ENCODE measurements at regions of chr11 and their contacts with region 1.

Region 1: DNA sequence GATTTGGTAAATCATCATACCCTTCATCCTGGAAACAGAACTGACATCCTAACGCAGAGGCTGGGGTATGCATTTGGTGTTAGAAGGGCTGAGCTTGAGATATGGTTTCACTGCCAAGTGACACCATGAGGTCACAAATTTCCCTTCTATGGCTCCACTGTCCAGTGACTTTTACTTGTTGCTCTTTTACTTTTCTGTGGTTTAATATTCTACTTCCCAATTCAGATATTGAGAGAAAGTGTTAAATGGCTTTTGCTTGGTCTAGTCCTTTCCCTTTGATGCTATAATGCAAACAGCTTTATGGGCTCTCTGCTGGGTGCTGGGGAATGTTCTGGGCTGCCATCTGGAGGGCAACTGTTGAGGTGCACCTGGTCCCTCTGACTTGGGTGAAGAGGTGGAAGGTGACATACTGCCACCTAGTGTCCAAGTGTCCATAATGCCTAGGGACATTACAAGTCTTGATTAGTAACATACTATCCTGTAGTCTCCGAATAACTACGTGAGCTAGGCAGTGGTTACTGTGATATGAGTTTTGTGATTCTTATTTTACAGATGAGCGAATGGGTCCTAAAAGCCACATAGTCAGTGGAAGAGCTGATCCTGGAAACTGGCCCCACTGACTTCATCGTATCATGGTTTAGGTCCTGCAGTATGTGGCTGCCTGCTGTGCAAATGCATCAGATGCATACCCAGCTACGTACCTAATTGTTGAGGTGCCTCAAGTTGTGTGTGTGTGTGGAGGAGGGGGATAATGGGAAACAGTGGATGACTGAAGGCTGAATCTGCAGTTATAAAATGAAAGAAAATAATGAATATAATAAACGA is 149.1 kb upstream of the RAG2 start:
- DNase-seq: peak; percentile 91
- H3K4me3 Mint-ChIP-seq: no peak overlapping the region
- H3K27ac Mint-ChIP-seq: no peak overlapping the region
- H3K4me1 Mint-ChIP-seq: peaks cover 3% of the 10 kb centered on the region
- H3K27me3 Mint-ChIP-seq: peaks cover 11% of the 10 kb centered on the region

Region 2: DNA sequence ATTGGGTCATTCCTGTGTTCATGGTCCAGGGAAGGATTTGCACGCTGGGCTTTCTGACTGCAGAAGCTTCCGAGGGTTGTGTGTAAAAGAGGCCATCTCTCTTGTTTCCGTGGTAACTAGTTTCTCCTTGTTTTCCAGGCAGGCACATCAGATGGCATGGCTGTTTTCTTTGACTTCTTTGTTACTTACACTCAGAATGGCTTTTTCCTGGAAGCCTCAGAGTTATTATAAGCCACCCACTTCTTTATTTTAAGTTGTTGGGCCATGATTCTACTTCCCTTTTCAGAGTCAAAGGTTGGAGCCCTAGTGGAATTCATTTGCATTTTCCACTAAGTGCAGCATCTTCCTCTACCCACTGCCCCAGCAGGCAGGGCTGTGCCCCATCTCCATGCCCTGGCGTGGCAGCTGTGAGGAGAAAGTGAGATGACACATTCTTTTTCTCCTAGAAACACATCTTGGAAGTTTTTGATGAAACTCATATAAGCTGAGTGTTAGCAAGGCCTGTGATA is 356.1 kb before region 1 on chr11:
- CTCF ChIA-PET with region 1: no interaction called
- POLR2A ChIA-PET with region 1: no interaction called
- intact Hi-C with region 1: loop called (anchors 10 kb)
- DNase-seq: peak; percentile 68
- H3K4me3 Mint-ChIP-seq: peak overlapping the region; percentile 36
- H3K27ac Mint-ChIP-seq: peak overlapping the region; percentile 96
- H3K4me1 Mint-ChIP-seq: peaks cover 82% of the 10 kb centered on the region
- H3K27me3 Mint-ChIP-seq: no peaks in the 10 kb centered on the region

Region 3: DNA sequence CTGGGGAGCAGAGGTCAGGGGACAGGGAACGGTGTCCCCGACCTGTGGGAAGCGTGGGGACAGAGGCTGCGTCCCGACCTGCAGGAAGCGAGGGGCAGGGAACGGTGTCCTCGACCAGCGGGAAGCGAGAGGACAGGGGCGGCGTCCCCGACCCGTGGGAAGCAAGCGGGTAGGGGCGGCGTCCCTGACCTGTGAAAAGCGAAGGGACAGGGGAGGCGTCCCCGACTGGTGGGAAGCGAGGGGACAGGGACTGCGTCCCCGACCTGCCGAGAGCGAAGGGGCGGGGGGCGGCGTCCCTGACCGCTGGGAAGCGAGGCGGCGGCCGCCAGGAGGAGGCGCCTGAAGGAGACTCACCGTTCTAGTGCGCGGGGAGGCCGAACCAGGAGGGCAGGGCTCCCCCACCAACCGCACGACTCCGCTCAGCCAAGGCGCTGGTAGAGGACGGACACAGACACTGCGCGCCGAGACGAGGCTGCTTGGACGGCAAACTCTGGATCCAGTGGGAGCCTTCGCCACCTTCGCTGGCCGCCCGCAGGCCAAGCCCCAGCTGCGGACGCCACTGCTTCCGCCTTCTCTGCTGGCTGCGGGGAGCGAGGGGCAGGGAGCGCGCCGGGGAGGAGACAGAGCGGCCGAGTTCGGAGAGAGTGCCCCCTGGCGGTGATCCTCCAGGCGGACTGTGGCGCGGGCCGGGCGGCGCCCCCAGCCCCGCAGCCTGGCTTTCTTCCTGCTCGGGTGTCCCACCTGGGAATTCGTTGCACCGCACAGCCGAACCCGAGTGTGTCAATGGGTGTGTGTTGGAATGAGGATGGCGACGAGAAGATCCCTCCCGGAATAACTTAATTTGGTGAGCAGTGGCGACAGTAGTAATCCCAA is 237.2 kb before region 1 on chr11 and contains the start of gene TRAF6:
- CTCF ChIA-PET with region 1: interaction called, 11 read pairs
- POLR2A ChIA-PET with region 1: no interaction called
- intact Hi-C with region 1: loop called (anchors 1 kb)
- DNase-seq: peak; percentile 92
- H3K4me3 Mint-ChIP-seq: peak within 1 kb of the TSS; percentile 94
- H3K27ac Mint-ChIP-seq: peak within 1 kb of the TSS; percentile 86
- H3K4me1 Mint-ChIP-seq: peaks cover 27% of the 10 kb centered on the region
- H3K27me3 Mint-ChIP-seq: peaks cover 5% of the 10 kb centered on the region
- total RNA-seq, gene TRAF6: 12.0 to 12.1 TPM

Region 4: GRCh38 chr11:36684840-36685801 is 62.0 kb before region 1 on chr11:
- CTCF ChIA-PET with region 1: interaction called, 16 read pairs
- POLR2A ChIA-PET with region 1: no interaction called
- intact Hi-C with region 1: no loop called
- DNase-seq: peak; percentile 42
- H3K4me3 Mint-ChIP-seq: no peak overlapping the region
- H3K27ac Mint-ChIP-seq: no peak overlapping the region
- H3K4me1 Mint-ChIP-seq: peaks cover 11% of the 10 kb centered on the region
- H3K27me3 Mint-ChIP-seq: peaks cover 53% of the 10 kb centered on the region

Region 5: DNA sequence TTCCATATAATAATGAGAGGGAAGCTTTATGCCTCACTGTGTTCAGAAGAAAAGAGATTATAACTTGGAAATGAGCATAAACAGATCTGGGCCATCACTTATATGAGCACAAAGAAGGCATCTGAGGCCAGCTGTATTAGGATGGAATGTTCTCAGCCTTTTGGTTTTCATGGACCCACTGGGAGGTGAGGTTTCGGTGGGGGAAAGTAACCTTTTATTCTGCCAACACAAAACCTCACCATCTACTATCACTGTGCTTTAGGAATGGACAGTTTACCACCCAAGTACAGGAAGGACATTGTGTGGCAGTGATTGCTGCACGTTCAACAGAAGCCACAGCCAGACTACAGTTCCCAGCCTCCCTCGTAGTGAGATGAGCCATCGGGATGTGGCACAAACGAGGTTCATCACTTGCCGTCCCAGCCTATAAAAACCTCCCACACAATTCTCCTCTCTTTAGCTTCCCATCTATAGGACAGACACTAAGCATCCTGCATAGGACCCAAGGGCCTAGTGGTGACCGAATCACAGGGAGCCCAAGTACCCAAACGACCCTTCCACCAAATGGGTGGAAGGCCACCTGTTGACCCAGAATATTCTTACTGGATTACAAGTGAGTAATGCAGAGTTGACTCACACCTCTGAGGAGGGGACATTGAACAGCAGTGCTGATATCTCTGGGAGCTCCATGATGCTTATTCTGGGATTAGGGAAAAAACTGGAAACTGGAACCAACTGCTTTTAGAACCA is 27.6 kb before region 1 on chr11:
- CTCF ChIA-PET with region 1: interaction called, 22 read pairs
- POLR2A ChIA-PET with region 1: no interaction called
- intact Hi-C with region 1: no loop called
- DNase-seq: no peak
- H3K4me3 Mint-ChIP-seq: no peak overlapping the region
- H3K27ac Mint-ChIP-seq: no peak overlapping the region
- H3K4me1 Mint-ChIP-seq: no peaks in the 10 kb centered on the region
- H3K27me3 Mint-ChIP-seq: peaks cover 2% of the 10 kb centered on the region

Region 6: GRCh38 chr11:36763187-36763586 is 16.1 kb after region 1 on chr11:
- CTCF ChIA-PET with region 1: interaction called, 10 read pairs
- POLR2A ChIA-PET with region 1: no interaction called
- intact Hi-C with region 1: no loop called
- DNase-seq: peak; percentile 10
- H3K4me3 Mint-ChIP-seq: no peak overlapping the region
- H3K27ac Mint-ChIP-seq: no peak overlapping the region
- H3K4me1 Mint-ChIP-seq: peaks cover 3% of the 10 kb centered on the region
- H3K27me3 Mint-ChIP-seq: peaks cover 1% of the 10 kb centered on the region

Region 7: DNA sequence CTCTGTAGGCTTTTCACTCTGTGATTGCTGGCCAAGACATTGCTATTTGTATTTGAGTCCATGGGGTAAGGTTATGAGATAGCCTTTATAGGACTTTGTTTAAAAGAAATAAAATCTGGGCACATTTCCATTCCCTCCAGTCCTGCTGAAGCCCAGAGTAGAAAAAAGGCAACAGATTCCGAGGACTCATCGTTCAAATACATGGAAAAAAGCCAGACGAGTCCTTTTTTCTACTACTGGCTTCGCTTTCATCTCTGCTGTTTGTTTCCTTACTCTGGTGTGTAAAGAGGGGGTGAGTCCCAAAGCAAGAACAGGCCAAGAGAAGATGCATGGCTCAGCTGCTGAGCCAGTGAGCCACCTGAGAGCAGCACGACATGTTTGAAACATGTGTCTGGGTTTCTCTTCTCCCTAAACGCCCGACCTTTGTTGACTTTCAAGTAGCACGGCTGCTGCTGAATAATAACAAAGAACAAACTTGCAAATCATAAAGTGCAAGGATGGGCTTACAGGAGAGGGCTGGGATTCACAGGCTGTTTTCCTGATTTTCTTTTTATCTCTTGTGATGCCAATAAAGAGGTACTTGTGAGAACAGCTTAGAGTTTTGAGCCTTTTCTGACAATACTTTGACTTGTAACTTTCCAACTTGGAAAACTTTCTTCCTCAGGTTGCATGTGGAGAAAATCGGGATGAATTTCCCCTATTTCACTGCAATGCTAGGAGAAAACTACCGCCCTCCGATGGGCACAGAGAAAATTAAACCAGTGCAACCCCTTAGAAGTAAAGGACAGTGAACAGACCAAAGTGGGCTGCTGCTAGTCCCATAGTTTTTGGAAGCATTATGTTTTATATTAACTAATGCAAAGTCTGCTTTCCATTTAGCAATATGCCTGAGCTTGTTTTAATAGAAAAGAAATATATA is 46.2 kb after region 1 on chr11:
- CTCF ChIA-PET with region 1: no interaction called
- POLR2A ChIA-PET with region 1: no interaction called
- intact Hi-C with region 1: no loop called
- DNase-seq: no peak
- H3K4me3 Mint-ChIP-seq: no peak overlapping the region
- H3K27ac Mint-ChIP-seq: no peak overlapping the region
- H3K4me1 Mint-ChIP-seq: no peaks in the 10 kb centered on the region
- H3K27me3 Mint-ChIP-seq: no peaks in the 10 kb centered on the region